PC-9 (cell line): ENCODE measurements at regions of chr6 and their contacts with region 1.

Region 1: DNA sequence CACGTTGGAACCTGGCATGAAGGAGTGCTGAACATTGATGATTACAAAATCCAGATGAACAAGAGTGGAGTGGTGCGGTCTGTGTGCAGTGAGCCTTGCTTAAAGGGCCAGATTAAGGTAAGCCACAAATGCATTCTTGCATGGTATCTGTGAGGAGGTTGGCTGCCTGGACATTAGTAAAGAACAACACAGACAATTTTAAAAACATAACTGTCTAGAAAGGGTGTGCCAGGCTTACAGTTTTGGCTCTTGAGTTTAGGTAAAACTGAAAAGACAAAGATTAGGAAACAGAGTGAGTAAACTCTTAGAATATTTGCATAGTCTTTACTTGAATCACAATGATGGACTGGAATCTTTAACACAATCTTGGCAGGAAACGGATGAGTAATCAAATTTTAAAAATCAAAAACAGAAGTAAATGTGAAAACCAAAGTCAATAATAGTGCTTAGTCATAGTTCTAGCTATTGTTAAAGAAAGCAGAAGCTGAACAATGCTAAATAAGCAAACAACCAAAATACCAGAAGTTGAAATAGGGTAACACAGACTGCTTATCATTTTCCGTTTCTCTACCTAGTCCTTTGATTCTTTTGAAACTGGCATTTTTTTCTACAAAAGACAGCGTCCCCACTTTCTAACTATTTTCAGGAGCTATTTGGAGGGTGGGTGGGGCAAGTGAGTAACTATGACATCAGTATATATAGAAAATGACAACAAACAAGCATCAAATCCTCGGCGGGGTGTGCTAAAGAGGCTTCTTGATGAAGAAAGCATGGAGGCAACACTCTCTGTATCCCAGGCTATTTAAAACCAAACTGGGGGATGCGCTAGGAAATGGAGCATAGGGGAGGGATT is 185.8 kb upstream of the RAB32 start:
- DNase-seq: peak; percentile 13 to 66
- H3K4me3 ChIP-seq: peak overlapping the region; percentile 18; the same call in 1 of the 2 replicates
- H3K27ac ChIP-seq: peak overlapping the region; percentile 52
- H3K4me1 ChIP-seq: peaks cover 21% of the 10 kb centered on the region
- H3K27me3 ChIP-seq: no peaks in the 10 kb centered on the region
- CTCF ChIP-seq: no peak

Region 2: GRCh38 chr6:145086197-145086596 is 1271.6 kb before region 1 on chr6:
- CTCF ChIA-PET with region 1: no interaction called
- POLR2A ChIA-PET with region 1: no interaction called
- intact Hi-C with region 1: no loop called
- DNase-seq: peak in 1 of 2 experiments; percentile 1
- H3K4me3 ChIP-seq: no peak overlapping the region
- H3K27ac ChIP-seq: no peak overlapping the region
- H3K4me1 ChIP-seq: no peaks in the 10 kb centered on the region
- H3K27me3 ChIP-seq: no peaks in the 10 kb centered on the region
- CTCF ChIP-seq: no peak

Region 3: DNA sequence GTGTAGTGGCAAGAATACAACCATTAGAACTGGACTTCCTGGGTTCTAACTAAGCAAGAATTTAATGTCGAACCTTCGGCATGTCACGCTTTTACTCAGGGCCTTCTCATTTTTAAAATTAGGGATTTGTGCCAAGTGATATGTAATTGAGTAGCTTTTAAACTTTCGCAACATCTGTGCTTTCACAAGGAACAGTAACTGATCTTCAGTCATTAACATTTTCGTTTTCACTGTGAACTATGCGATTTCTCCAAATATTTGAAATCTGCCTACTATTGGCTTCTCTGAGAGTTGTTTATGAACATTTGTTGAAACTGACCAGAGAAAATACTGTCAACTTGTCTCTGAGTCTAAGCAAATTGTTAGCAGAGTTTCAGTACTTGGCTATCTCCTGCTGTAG is 301.3 kb before region 1 on chr6:
- CTCF ChIA-PET with region 1: no interaction called
- POLR2A ChIA-PET with region 1: no interaction called
- intact Hi-C with region 1: no loop called
- DNase-seq: no peak
- H3K4me3 ChIP-seq: no peak overlapping the region
- H3K27ac ChIP-seq: no peak overlapping the region
- H3K4me1 ChIP-seq: no peaks in the 10 kb centered on the region
- H3K27me3 ChIP-seq: no peaks in the 10 kb centered on the region
- CTCF ChIP-seq: no peak

Region 4: DNA sequence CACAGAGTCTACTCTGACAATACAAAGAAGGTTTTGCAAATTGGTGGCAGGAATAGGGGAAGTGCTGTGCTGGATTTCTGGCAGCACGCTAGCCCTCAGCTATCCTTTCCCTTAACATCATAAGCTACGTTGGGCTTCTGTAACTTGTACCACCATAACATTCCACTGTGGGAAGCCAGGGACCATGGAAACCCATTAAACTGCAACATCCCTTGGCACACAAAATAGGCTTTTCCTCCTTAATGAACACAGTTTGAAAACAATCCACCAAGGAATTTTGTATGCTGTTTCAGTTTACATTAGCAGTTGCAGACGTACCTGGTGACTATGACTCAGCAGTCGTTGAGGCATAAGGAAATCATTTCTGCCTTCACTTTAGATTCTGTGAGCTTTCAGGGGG is 18.1 kb before region 1 on chr6:
- CTCF ChIA-PET with region 1: no interaction called
- POLR2A ChIA-PET with region 1: no interaction called
- intact Hi-C with region 1: loop called (anchors 2 kb)
- DNase-seq: peak; percentile 2 to 42
- H3K4me3 ChIP-seq: peak overlapping the region; percentile 20; the same call in 1 of the 2 replicates
- H3K27ac ChIP-seq: peak overlapping the region; percentile 44
- H3K4me1 ChIP-seq: peaks cover 13% of the 10 kb centered on the region
- H3K27me3 ChIP-seq: no peaks in the 10 kb centered on the region
- CTCF ChIP-seq: no peak

Region 5: DNA sequence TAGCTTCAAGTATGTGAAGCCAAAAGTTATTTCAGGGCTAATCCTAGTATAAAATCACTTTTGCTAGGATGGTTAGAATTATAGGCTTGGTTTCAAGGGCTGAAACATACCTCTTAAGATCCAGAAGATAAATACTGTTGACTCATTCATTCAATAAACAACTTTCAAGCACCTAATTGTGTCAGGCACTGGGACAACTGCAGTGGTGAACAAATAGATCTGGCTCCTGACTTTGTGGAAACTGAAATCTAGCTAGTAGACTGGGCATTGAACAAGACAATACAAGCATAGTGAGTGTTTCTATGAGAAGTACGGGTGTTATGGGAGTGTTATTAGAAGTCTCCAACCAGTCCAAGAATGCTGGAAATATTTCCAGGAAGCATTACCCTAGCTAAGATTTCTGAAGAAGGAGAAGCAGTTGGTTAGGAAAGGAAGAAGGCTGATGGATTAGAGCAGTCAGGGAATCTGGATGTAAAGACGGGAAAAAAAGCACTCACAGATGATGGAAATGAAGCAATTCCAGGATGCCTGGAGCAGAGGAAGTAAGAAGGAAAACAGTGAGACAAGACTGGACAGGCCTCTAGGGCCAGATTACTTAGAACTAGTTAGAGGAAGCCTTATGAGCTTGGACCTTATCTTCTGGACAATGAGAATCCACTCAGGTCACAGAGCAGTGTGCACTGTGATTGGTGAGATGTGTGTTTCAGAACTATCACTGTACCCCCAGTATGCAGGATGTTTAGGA is 53.2 kb after region 1 on chr6:
- CTCF ChIA-PET with region 1: no interaction called
- POLR2A ChIA-PET with region 1: no interaction called
- intact Hi-C with region 1: no loop called
- DNase-seq: no peak
- H3K4me3 ChIP-seq: no peak overlapping the region
- H3K27ac ChIP-seq: no peak overlapping the region
- H3K4me1 ChIP-seq: no peaks in the 10 kb centered on the region
- H3K27me3 ChIP-seq: no peaks in the 10 kb centered on the region
- CTCF ChIP-seq: no peak

Region 6: DNA sequence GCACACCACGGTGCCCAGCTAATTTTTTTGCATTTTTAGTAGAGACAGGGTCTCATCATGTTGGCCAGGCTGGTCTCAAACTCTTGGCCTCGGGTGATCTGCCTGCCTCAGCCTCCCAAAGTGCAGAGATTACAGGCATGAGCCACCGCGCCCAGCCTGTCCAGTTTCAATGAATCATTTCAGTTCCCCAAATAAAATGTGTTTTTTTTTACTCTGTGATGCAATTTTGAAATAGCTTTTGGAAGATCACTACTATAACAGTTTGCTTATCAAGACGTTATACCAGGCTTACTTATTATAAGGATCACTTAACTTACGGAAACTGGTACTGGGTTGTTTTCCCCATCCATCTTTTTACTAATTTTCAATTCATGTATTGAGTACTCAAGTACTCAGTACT is 1230.7 kb after region 1 on chr6:
- CTCF ChIA-PET with region 1: no interaction called
- POLR2A ChIA-PET with region 1: no interaction called
- intact Hi-C with region 1: no loop called
- DNase-seq: no peak
- H3K4me3 ChIP-seq: no peak overlapping the region
- H3K27ac ChIP-seq: no peak overlapping the region
- H3K4me1 ChIP-seq: no peaks in the 10 kb centered on the region
- H3K27me3 ChIP-seq: no peaks in the 10 kb centered on the region; the same call in 1 of the 2 replicates
- CTCF ChIP-seq: no peak